ENCODE measurements at regions of chr6 and their contacts with region 1.

Region 1: GRCh38 chr6:4135665-4136353 is 434 bp upstream of the ECI2 start:
- DNase-seq: peak; percentile 92 to 98
- H3K4me3 ChIP-seq: peak overlapping the region; percentile 80 to 87
- H3K27ac ChIP-seq: peak overlapping the region; percentile 90 to 94
- H3K4me1 ChIP-seq: peaks cover 0 to 9% of the 10 kb centered on the region in 2 donors
- H3K27me3 ChIP-seq: no peaks in the 10 kb centered on the region
- CTCF ChIP-seq: no peak

Region 2: GRCh38 chr6:2988426-2989331 is 1147.1 kb before region 1 on chr6:
- intact Hi-C with region 1: loop called (anchors 10 kb)
- DNase-seq: peak; percentile 84 to 97
- H3K4me3 ChIP-seq: peak overlapping the region; percentile 78 to 86
- H3K27ac ChIP-seq: peak overlapping the region; percentile 95 to 98
- H3K4me1 ChIP-seq: peaks cover 6 to 8% of the 10 kb centered on the region in 2 donors
- H3K27me3 ChIP-seq: no peaks in the 10 kb centered on the region
- CTCF ChIP-seq: peak; percentile 87 to 98 (median 97)

Region 3: DNA sequence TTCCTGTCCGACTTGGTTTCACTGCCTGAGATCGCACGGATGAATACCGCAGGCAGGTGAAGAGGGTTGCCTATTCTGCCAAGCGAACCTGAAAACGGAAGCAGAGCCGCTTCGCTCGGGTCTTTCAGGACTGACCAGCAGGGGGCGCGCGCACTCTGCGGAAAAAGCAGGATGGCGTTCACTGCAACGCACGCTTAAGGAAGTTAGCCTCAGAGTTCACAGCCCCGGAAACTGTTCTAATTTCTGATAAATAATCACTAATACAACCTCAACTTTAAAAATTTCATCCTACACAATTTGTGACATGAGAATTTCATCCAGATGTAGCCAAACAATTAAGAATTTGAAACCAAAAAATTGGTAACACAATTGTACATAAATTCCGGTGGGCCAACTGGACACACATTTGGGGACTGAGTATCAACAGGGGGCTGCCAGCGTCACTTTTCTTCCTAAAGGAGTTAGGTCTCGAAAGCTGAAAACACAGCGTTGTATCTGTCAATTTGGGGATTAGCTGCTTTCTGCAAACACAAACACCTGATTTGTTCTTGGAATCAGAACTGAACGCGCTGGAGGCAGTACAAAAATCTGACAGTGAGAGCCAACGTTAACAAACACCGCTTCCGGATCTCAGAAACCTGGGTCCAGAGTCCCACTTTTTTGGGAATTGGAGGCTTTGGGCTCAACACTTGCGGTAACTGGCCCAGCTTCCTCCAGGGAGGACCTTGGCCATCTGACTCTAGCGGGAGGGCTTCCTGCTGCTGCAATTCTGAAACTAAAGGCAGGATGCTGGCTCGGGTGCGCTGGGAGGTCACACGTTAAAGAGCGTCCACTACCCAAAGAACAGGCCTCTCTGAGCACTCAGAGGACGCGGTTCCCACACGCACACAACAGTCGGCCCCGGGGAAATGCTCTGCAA is 393.1 kb before region 1 on chr6:
- intact Hi-C with region 1: loop called (anchors 10 kb)
- DNase-seq: peak in 1 of 2 donors; percentile 91
- H3K4me3 ChIP-seq: peak overlapping the region; percentile 37 to 82
- H3K27ac ChIP-seq: peak overlapping the region; percentile 100
- H3K4me1 ChIP-seq: peaks cover 43 to 87% of the 10 kb centered on the region in 2 donors
- H3K27me3 ChIP-seq: no peaks in the 10 kb centered on the region
- CTCF ChIP-seq: peak; percentile 85 to 96 (median 94)

Region 4: DNA sequence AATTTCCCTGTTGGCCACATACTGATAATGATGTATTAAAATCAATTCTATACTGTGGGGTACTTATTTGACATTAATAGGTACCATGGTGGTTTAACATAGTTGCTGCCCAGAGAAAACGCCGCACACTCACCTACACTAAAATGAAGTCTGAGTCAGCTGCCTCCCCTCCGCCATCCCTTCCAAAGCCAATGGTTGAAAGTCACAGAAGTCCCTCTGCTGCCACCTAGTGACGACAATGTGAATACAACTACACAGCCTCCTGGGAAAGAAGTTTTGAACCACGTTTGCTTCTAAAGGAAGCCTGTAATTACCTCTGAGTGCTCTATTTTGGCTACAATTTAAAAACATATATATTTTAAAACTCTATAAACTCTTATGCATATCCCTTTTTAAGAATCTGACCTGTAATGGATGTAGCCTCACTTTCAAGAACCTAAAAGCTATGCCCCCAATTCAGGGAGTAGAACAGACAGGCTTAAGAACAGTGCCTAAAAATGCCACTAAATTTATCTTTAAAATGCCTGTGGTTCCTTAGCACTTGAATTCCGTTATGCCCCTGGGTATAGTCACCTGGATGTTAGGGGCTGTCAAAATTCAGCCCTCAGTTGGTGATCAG is 20.1 kb after region 1 on chr6:
- intact Hi-C with region 1: loop called (anchors 2 kb)
- DNase-seq: peak; percentile 24 to 90
- H3K4me3 ChIP-seq: no peak overlapping the region
- H3K27ac ChIP-seq: no peak overlapping the region
- H3K4me1 ChIP-seq: no peaks in the 10 kb centered on the region
- H3K27me3 ChIP-seq: no peaks in the 10 kb centered on the region
- CTCF ChIP-seq: peak; percentile 60 to 88 (median 75)

Region 5: DNA sequence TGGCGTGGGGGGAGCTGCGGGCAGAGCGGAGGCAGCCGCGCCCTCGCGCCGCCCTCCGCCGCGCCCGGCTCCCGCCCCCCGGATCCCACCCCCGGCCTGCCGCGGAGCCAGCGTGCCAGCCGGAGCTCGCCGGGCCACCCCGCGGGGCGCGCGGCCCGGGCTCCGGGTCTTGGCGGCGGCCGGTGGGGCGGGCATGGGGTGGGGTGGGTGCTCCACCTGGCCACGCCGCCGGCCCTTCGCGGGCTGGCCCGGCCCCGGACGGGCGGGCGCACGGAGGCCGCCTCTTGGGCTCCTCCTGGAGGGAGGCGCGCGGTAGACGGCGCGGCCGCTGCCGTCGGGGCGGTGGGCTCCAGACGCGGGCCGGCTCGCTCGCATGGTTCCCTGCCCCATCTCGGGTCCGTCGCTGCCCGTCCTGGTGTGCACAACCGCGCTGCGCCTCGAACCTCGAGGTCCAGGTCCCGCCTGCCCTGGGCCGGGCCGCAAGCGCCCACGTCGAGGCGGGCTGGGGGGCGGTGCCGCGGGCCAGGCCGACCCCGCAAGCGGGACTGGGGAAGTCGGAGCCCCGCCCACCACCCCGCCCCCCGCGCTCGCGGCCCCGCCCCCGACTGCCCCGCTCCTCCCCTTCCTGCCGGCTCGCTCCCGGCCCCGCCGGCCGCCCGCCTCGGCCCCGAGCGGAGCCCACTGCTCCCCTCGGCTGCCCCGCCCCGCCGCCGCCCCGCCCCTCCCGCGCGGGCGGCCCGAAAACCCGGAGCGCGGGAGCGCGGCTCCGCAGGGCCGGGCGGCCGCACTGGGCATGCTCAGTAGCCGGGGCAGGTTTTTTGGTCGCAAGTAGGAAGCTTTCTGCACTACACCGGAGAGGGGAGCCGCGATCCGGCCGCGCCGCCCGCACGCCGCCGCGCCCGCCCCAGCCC is 640.0 kb after region 1 on chr6 and contains the start of gene CDYL:
- intact Hi-C with region 1: loop called (anchors 5 kb)
- DNase-seq: peak; percentile 38 to 93
- H3K4me3 ChIP-seq: peak within 1 kb of the TSS; percentile 93 to 97
- H3K27ac ChIP-seq: peak within 1 kb of the TSS; percentile 75 to 95
- H3K4me1 ChIP-seq: peaks cover 5 to 9% of the 10 kb centered on the region in 2 donors
- H3K27me3 ChIP-seq: no peaks in the 10 kb centered on the region
- CTCF ChIP-seq: peak in 2 of 3 experiments; percentile 12 to 33
- total RNA-seq, gene CDYL: 73.7 TPM

Region 6: GRCh38 chr6:5764401-5764955 is 1628.7 kb after region 1 on chr6:
- intact Hi-C with region 1: loop called (anchors 5 kb)
- DNase-seq: peak; percentile 56 to 79
- H3K4me3 ChIP-seq: peak overlapping the region in 1 of 2 donors; percentile 52
- H3K27ac ChIP-seq: peak overlapping the region; percentile 81 to 90
- H3K4me1 ChIP-seq: peaks cover 8 to 40% of the 10 kb centered on the region in 2 donors
- H3K27me3 ChIP-seq: no peaks in the 10 kb centered on the region
- CTCF ChIP-seq: no peak

Measured in ascending aorta (tissue), 2 donors.